ENCODE measurements at regions of chr1 and their contacts with region 1.

Region 1: DNA sequence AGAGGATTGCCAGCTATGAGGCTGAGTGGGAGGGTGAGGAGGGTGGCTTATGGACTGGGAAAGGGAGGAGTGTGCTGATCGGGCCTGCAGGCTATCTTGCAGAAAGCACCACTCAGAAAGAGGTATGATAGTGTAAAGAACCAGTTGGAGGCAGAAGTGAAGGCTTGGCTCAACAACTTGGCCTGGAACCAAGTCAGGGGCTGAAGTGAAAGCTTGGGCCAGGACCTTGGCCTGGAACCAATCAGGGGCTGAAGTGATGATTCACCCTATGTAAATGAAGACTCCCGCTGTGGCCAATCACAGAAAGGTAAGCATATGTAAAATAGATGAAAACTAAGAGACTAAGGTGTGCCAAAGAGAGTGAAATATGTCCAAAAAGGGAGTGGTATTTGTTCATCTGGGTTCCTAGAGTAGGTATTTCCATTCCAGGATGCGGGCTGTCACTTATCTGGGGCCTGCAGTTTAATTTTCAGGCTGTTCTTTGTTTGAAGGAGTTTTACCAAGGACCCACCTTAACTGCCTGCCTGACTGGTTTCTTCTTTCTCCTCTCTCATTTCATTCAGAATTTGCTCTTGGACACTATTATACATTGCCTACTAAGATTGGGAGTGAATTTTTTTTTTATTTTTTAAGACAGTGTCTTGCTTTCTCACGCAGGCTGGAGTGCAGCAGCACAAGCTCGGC is 5.1 kb upstream of the RFX5 start:
- DNase-seq: no peak
- ATAC-seq: no peak
- H3K4me3 ChIP-seq: no peak overlapping the region
- H3K27ac ChIP-seq: no peak overlapping the region
- H3K4me1 ChIP-seq: peaks cover 5% of the 10 kb centered on the region; the same call in 1 of the 2 replicates
- H3K27me3 ChIP-seq: no peaks in the 10 kb centered on the region
- CTCF ChIP-seq: no peak

Region 2: GRCh38 chr1:151156515-151156819 is 195.7 kb before region 1 on chr1 and contains the start of gene TNFAIP8L2:
- CTCF ChIA-PET with region 1: no interaction called
- POLR2A ChIA-PET with region 1: no interaction called
- in situ Hi-C with region 1: no loop called
- intact Hi-C with region 1: no loop called
- DNase-seq: no peak
- ATAC-seq: peak; percentile 87
- H3K4me3 ChIP-seq: no peak within 1 kb of the TSS
- H3K27ac ChIP-seq: no peak within 1 kb of the TSS
- H3K4me1 ChIP-seq: no peaks in the 10 kb centered on the region
- H3K27me3 ChIP-seq: no peaks in the 10 kb centered on the region
- CTCF ChIP-seq: no peak
- total RNA-seq, gene TNFAIP8L2: not detected

Region 3: DNA sequence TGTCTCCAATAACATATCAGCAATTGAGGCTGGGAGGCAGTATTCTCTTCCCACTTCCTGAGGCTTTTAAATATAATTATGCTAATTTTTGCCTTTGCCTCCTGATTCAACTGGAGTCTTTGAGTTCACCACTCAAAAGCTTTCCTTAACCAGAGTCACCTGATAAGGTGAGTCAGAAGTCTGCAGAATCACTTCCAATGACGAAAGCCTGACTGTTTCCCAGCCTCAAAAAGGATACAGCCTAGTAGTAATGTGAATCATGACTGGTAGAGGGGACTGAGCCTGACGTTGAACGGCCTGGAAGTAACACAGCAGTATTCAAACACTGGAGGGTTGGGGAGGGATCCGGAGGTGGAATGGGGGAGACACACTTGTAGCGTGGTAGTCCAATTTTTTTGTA is 421.6 kb after region 1 on chr1:
- CTCF ChIA-PET with region 1: no interaction called
- POLR2A ChIA-PET with region 1: interaction called, 10 read pairs
- in situ Hi-C with region 1: no loop called
- intact Hi-C with region 1: no loop called
- DNase-seq: no peak
- ATAC-seq: no peak
- H3K4me3 ChIP-seq: no peak overlapping the region
- H3K27ac ChIP-seq: no peak overlapping the region
- H3K4me1 ChIP-seq: no peaks in the 10 kb centered on the region
- H3K27me3 ChIP-seq: no peaks in the 10 kb centered on the region
- CTCF ChIP-seq: no peak

Region 4: GRCh38 chr1:151783424-151784195 is 431.5 kb after region 1 on chr1:
- CTCF ChIA-PET with region 1: interaction called, 12 read pairs
- POLR2A ChIA-PET with region 1: no interaction called
- in situ Hi-C with region 1: no loop called
- intact Hi-C with region 1: no loop called
- DNase-seq: no peak
- ATAC-seq: no peak
- H3K4me3 ChIP-seq: no peak overlapping the region
- H3K27ac ChIP-seq: no peak overlapping the region
- H3K4me1 ChIP-seq: peaks cover 6% of the 10 kb centered on the region; the same call in 1 of the 2 replicates
- H3K27me3 ChIP-seq: no peaks in the 10 kb centered on the region
- CTCF ChIP-seq: no peak